ENCODE measurements at regions of chr2 and their contacts with region 1.

Region 1: GRCh38 chr2:148764815-148765214 is 110.2 kb upstream of the KIF5C start:
- DNase-seq: no peak
- ATAC-seq: no peak
- H3K4me3 ChIP-seq: no peak overlapping the region
- H3K27ac ChIP-seq: no peak overlapping the region
- H3K4me1 ChIP-seq: no peaks in the 10 kb centered on the region
- H3K27me3 ChIP-seq: no peaks in the 10 kb centered on the region
- CTCF ChIP-seq: no peak

Region 2: GRCh38 chr2:147925886-147926285 is 838.9 kb before region 1 on chr2:
- intact Hi-C with region 1: loop called in 1 of 2 experiments (anchors 5 kb)
- DNase-seq: no peak
- ATAC-seq: no peak
- H3K4me3 ChIP-seq: no peak overlapping the region
- H3K27ac ChIP-seq: no peak overlapping the region
- H3K4me1 ChIP-seq: peaks cover 17% of the 10 kb centered on the region
- H3K27me3 ChIP-seq: no peaks in the 10 kb centered on the region
- CTCF ChIP-seq: no peak